Right cardiac atrium (tissue), 5 donors: ENCODE measurements at regions of chr3 and their contacts with region 1.

Region 1: DNA sequence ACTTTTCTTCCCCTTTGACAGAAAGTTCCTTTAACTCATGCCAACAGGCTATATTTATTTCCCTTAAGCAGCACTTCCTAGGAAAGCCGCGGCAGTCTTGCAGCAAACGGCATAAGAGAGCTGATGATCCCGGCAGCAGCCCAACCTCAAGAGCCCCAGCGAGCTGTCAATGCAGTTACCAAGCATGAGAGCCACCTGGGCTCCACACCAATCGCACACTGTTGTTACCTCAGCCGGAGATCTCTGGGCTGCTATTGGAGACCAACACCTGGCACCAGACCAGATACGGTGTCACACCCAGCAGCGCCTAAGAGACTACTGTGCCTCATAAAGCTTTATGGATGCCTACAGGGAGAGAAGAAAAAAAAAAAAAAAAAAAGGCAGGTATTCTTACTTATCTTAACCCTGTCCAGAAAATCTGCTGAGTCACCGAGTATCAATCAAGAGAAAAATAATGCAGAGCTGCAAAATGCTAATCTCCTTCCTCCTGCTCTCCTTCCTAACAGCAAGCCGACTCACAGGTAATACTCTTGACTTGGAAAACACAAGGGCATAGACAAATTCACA is 11.7 kb downstream of the ABCC5 start:
- DNase-seq: peak; percentile 53 to 81 (median 78)
- ATAC-seq: peak; percentile 81 to 84
- H3K4me3 ChIP-seq: peak overlapping the region; percentile 25
- H3K27ac ChIP-seq: peak overlapping the region; percentile 72
- H3K4me1 ChIP-seq: peaks cover 3% of the 10 kb centered on the region
- H3K27me3 ChIP-seq: no peaks in the 10 kb centered on the region

Region 2: DNA sequence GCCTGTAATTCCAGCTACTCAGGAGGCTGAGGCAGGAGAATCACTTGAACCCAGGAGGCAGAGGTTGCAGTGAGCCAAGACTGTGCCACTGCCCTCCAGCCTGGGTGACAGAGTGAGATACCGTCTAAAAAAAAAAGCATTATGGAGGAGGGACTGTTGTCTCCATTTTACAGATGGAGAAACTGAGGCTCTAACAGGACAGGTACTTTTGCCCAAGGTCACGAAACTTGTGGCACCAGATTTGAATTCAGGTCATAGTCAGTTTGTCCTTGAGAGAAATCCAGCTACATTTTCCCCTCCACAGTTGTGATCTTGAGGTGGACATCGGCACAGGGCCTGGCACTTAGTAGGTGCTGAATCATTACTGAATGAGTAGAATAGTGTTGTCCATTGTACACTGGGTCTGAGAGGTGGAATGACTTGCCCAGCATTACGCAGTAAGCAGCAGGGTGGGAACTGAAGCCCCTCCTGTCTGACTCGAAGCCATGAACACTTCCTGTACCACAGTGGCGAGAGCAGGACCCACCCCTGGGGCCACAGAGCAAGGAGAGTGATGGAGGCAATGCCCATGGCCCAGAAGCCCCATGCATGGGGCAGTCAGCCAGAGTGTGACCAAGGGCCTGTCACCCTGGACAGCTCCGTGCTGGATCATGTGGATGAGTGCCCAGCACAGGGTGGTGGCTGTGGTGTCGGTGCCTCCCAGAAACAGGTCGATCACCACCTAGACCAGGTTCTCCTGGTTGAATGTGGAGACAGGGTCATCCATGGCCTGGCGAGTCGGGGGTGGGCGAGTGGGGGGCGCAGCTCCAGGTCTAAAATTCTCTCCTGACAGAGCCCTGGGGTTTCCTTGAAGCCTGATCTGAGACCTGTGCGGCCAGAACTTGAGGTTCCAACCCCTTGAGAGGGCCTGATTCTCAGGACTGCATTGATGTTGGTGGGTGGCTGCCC is 100.9 kb before region 1 on chr3:
- intact Hi-C with region 1: loop called in 1 of 4 experiments (anchors 10 kb)
- DNase-seq: no peak
- ATAC-seq: peak; percentile 26 to 52
- H3K4me3 ChIP-seq: no peak overlapping the region
- H3K27ac ChIP-seq: no peak overlapping the region
- H3K4me1 ChIP-seq: no peaks in the 10 kb centered on the region
- H3K27me3 ChIP-seq: no peaks in the 10 kb centered on the region